ENCODE measurements at regions of chr14 and their contacts with region 1.

Region 1: DNA sequence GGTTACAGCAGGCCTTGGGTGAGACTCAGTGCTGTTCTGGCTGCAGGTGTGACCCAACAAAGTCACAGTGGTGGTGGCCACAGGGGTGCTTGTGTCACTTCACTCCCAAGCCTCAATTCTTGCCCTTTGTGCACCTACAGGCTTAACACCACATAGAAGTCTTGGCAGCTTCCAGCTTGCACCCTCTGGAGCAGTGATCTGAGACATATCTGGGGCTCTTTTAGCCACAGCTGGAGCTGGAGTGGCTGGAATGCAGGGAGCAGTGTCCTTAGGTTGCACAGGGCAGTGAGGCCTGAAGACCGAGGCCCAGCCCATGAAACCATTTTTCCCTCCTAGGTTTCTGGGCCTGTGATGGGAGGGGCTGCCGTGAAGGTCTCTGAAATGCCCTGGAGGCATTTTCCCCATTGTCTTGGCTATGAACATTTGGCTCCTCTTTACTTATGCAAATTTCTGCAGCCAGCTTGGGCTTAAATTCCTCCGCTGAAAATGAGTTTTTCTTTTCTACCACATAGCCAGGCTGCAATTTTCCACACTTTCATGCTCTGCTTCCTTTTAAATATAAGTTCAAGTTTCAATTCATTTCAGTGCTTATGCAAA is 37.7 kb downstream of the ADAM21 start:
- DNase-seq: no peak
- H3K4me3 ChIP-seq: no peak overlapping the region
- H3K27ac ChIP-seq: no peak overlapping the region
- H3K4me1 ChIP-seq: no peaks in the 10 kb centered on the region
- H3K27me3 ChIP-seq: no peaks in the 10 kb centered on the region
- CTCF ChIP-seq: no peak

Region 2: DNA sequence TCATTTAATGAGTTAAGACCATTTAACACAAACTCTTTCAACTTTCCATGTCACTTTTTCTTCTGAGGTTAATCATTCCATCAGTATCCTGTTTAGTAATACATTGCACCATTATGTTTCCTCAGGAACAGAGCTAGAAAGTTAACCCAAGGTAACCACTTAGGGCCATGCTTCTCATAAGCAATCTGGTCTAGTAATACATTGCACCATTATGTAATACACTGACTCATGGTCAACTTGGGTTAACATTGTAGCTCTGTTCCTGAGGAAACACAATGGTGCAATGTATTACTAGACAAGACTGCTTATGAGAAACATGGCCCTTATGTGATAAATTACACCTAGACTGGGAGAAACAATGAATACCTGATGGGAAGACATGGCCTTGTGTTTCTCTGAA is 1113.2 kb before region 1 on chr14:
- CTCF ChIA-PET with region 1: no interaction called
- POLR2A ChIA-PET with region 1: interaction called, 13 read pairs
- intact Hi-C with region 1: no loop called
- DNase-seq: peak in 1 of 2 experiments; percentile 66
- H3K4me3 ChIP-seq: no peak overlapping the region
- H3K27ac ChIP-seq: no peak overlapping the region
- H3K4me1 ChIP-seq: no peaks in the 10 kb centered on the region
- H3K27me3 ChIP-seq: no peaks in the 10 kb centered on the region
- CTCF ChIP-seq: no peak

Region 3: DNA sequence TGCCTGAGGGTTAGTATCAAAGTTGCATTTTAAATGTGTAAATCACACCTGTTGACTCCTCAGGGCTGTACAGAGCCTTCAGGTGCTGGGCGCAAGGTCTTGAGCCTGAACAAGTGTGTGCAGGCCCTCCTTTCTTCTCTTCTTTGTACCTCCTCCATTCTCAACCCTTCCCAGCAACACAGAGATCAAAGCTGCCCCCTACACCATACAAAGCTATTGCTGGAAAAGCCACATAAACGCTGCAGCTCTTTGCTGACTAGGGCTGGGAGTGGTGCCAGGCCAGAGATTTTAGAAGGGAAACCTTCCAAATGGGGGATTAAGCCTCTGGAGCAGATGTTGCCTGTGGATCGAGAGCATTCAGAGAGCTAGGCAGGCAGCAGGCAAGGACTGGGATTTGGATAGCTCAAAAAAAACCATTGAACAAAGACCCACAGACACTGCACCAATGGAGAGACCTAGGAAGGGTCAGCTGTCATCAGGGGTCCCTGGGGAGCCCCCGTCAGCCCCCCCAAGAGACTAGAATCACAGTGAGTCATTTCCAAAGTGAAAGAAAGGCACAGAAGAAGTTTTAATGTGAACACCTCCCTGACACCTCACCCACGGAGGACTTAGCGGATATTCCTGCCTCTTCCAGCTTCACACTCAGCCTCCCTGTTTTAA is 896.5 kb before region 1 on chr14:
- CTCF ChIA-PET with region 1: no interaction called
- POLR2A ChIA-PET with region 1: no interaction called
- intact Hi-C with region 1: no loop called
- DNase-seq: no peak
- H3K4me3 ChIP-seq: no peak overlapping the region
- H3K27ac ChIP-seq: no peak overlapping the region
- H3K4me1 ChIP-seq: no peaks in the 10 kb centered on the region
- H3K27me3 ChIP-seq: no peaks in the 10 kb centered on the region
- CTCF ChIP-seq: no peak

Measured in PC-9 (cell line).